HepG2 (cell line): ENCODE measurements at regions of chr12 and their contacts with region 1.

Region 1: GRCh38 chr12:27710592-27711316 is at the start of gene MRPS35:
- DNase-seq: peak; percentile 72
- ATAC-seq: peak; percentile 97
- H3K4me3 ChIP-seq: peak within 1 kb of the TSS; percentile 72 to 94 (median 90)
- H3K27ac ChIP-seq: peak within 1 kb of the TSS; percentile 82
- H3K4me1 ChIP-seq: peaks cover 42% of the 10 kb centered on the region
- H3K27me3 ChIP-seq: peaks cover 0 to 3% of the 10 kb centered on the region in 2 experiments; a peak in 1 of 5 replicates
- CTCF ChIP-seq: peak; percentile 41
- EP300 ChIP-seq: no peak
- POLR2A ChIP-seq: peak; percentile 94 to 95
- RAD21 ChIP-seq: peak; percentile 36; the same call in 1 of the 2 replicates
- total RNA-seq, gene MRPS35: 104 and 160 TPM in 2 replicates

Region 2: DNA sequence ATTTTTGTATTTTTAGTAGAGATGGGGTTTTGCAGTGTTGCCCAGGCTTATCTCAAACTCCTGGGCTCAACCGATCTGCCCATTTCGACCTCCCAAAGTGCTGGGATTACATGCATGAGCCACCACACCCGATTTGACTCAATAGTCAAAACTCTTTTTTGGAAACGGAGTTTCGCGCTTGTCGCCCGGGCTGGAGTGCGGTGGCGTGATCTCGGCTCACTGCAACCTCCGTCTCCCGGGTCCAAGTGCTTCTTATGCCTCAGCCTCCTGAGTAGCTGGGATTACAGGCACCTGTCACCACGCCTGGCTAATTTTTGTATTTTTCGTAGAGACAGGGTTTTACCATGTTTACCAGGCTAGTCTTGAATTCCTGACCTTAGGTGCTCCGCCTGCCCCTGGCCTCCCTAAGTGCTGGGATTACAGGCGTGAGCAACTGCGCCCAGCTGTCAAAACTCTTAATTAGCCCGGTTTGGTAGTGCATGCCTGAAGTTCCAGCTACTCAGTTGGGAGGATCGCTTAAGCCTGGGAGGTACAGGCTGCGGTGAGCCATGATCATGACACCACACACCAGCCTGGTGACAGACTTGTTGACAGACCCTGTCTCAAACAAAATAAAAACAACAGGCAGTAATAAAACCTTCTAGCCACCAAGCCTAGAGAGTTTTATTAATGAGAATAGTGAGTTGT is 676.0 kb before region 1 on chr12:
- CTCF ChIA-PET with region 1: no interaction called
- POLR2A ChIA-PET with region 1: no interaction called
- in situ Hi-C with region 1: no loop called
- intact Hi-C with region 1: no loop called
- DNase-seq: no peak
- ATAC-seq: no peak
- H3K4me3 ChIP-seq: no peak overlapping the region
- H3K27ac ChIP-seq: no peak overlapping the region
- H3K4me1 ChIP-seq: peaks cover 11% of the 10 kb centered on the region
- H3K27me3 ChIP-seq: no peaks in the 10 kb centered on the region
- CTCF ChIP-seq: no peak
- EP300 ChIP-seq: no peak
- POLR2A ChIP-seq: no peak
- RAD21 ChIP-seq: no peak

Region 3: DNA sequence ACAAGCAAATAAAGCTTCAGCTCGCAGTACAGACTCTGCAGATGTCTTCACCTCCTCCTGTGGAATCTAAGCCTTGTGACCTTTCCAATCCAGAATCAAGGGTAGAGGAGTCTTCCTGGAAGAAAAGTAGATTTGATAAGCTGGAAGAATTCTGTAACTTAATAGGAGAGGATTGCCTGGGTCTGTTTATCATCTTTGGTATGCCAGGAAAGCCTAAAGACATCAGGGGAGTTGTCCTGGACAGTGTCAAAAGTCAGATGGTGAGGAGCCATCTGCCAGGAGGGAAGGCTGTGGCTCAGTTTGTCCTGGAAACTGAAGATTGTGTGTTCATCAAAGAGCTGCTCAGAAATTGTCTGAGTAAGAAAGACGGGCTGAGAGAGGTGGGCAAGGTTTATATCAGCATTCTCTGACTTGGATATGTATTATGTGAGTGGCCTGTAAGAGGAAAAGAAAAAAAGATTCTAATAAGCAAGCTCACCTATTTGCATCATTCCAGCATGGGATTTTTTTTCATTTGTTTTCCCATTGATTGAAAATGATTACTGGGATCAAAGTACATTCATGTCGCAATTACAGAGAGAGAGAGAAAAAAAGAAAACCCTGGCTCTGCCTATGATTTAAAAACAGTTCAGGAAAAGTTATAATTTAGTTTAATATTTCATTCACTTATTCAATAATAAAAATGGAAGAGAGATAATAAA is 13.7 kb before region 1 on chr12:
- CTCF ChIA-PET with region 1: no interaction called
- POLR2A ChIA-PET with region 1: interaction called, 18 read pairs
- in situ Hi-C with region 1: no loop called
- intact Hi-C with region 1: no loop called
- DNase-seq: peak; percentile 77
- ATAC-seq: peak; percentile 63
- H3K4me3 ChIP-seq: peak overlapping the region in 2 of 3 experiments; percentile 20 to 30; a peak in 1 of 6 replicates
- H3K27ac ChIP-seq: peak overlapping the region; percentile 61
- H3K4me1 ChIP-seq: peaks cover 40% of the 10 kb centered on the region
- H3K27me3 ChIP-seq: no peaks in the 10 kb centered on the region
- CTCF ChIP-seq: no peak
- EP300 ChIP-seq: peak; percentile 37 to 43; a peak in 1 of 4 replicates
- POLR2A ChIP-seq: no peak
- RAD21 ChIP-seq: no peak

Region 4: DNA sequence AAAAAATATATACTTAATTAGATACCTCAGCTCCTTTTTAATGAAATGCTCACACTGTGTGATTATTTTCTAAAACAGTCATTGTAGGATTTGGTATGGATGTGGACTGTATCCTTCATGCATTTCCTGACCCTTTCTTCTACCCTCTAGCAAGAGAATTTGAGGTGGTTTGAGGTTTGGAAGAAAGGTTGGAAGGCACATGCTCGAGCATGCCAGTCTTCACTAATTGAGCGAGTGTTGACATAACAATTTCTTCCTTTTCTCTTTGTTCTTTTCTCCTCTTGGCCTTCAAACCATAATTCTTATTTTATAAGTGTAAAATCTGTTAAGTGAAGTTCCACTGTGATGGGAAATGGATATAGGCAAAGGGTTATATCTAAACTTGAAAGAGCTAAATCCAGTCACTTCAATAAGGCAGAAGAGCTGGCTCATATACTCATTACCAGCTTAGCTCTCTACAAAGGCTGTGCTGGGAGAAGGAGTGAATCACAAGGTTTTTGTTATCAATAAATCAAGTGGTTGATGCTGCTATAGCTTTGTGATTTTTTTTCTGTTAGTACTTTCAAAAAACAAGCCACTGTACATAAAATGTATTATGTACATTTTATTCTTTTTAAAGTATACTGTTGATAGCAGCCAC is 278.0 kb after region 1 on chr12:
- CTCF ChIA-PET with region 1: no interaction called
- POLR2A ChIA-PET with region 1: no interaction called
- in situ Hi-C with region 1: no loop called
- intact Hi-C with region 1: no loop called
- DNase-seq: no peak
- ATAC-seq: no peak
- H3K4me3 ChIP-seq: no peak overlapping the region
- H3K27ac ChIP-seq: no peak overlapping the region
- H3K4me1 ChIP-seq: no peaks in the 10 kb centered on the region
- H3K27me3 ChIP-seq: no peaks in the 10 kb centered on the region; a peak in 1 of 5 replicates
- CTCF ChIP-seq: no peak
- EP300 ChIP-seq: no peak
- POLR2A ChIP-seq: no peak
- RAD21 ChIP-seq: no peak